Panc1 (cell line): ENCODE measurements at regions of chr6 and their contacts with region 1.

Region 1: DNA sequence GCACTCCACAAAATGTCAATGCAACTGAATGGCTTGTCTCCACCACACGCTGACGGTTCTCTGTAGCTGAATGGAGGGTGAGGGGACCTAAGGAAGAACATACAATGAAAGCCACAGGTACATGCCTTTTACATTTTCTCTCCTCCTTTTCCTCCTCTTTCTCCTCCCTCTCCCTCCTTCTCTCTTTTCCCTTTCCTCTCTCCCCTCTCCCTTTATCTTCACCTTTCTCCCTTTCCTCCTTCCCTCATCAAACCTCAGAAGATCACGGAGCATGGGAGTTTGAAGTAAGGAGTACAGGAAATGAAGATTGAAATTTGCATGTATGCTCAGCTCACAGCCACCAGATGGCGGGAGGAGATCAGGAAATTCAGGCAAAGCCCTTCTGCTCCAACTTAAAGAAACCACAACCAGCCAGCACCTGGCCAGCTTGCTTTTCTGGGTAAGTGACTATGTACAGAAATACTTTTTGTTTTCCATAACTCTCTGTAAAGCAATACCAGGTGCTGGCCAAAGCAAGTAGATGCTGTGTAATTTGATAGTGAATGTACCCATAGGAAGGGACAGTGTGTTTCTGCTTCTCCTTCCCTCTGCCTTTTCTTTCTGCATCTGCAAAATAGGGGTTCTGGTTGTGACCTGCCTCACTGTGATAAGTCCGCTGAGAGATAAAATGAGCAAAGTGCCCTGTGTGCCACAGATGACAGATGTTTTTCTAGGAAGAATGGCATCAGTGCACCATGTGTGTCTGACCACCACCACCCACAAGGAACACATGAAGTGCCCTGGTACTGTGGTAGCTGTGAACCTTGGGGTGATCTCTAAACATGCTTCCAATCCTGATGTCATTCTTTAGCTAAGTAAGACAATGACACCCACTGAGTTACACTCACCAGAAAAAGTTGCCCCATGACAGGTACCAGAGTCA is 18.6 kb upstream of the FOXO3 start:
- DNase-seq: no peak
- ATAC-seq: peak; percentile 93
- H3K4me3 ChIP-seq: peak overlapping the region; percentile 5 to 35
- H3K27ac ChIP-seq: no peak overlapping the region
- H3K4me1 ChIP-seq: no peaks in the 10 kb centered on the region
- H3K27me3 ChIP-seq: no peaks in the 10 kb centered on the region
- CTCF ChIP-seq: peak; percentile 95

Region 2: GRCh38 chr6:108592371-108593337 is 50.6 kb after region 1 on chr6:
- CTCF ChIA-PET with region 1: no interaction called
- POLR2A ChIA-PET with region 1: no interaction called
- in situ Hi-C with region 1: no loop called
- intact Hi-C with region 1: no loop called
- DNase-seq: no peak
- ATAC-seq: no peak
- H3K4me3 ChIP-seq: no peak overlapping the region
- H3K27ac ChIP-seq: no peak overlapping the region
- H3K4me1 ChIP-seq: peaks cover 40% of the 10 kb centered on the region
- H3K27me3 ChIP-seq: no peaks in the 10 kb centered on the region
- CTCF ChIP-seq: no peak

Region 3: GRCh38 chr6:108782179-108783041 is 240.3 kb after region 1 on chr6:
- CTCF ChIA-PET with region 1: no interaction called
- POLR2A ChIA-PET with region 1: no interaction called
- in situ Hi-C with region 1: no loop called
- intact Hi-C with region 1: loop called (anchors 5 kb)
- DNase-seq: peak; percentile 96
- ATAC-seq: peak; percentile 96
- H3K4me3 ChIP-seq: peak overlapping the region; percentile 49 to 68
- H3K27ac ChIP-seq: peak overlapping the region; percentile 49
- H3K4me1 ChIP-seq: peaks cover 11% of the 10 kb centered on the region
- H3K27me3 ChIP-seq: no peaks in the 10 kb centered on the region; the same call in 1 of the 2 replicates
- CTCF ChIP-seq: peak; percentile 97

Region 4: GRCh38 chr6:108896111-108896661 is 354.1 kb after region 1 on chr6:
- CTCF ChIA-PET with region 1: interaction called, 24 read pairs
- POLR2A ChIA-PET with region 1: no interaction called
- in situ Hi-C with region 1: no loop called
- intact Hi-C with region 1: loop called (anchors 1 kb)
- DNase-seq: no peak
- ATAC-seq: no peak
- H3K4me3 ChIP-seq: no peak overlapping the region
- H3K27ac ChIP-seq: no peak overlapping the region
- H3K4me1 ChIP-seq: no peaks in the 10 kb centered on the region
- H3K27me3 ChIP-seq: no peaks in the 10 kb centered on the region
- CTCF ChIP-seq: no peak

Region 5: DNA sequence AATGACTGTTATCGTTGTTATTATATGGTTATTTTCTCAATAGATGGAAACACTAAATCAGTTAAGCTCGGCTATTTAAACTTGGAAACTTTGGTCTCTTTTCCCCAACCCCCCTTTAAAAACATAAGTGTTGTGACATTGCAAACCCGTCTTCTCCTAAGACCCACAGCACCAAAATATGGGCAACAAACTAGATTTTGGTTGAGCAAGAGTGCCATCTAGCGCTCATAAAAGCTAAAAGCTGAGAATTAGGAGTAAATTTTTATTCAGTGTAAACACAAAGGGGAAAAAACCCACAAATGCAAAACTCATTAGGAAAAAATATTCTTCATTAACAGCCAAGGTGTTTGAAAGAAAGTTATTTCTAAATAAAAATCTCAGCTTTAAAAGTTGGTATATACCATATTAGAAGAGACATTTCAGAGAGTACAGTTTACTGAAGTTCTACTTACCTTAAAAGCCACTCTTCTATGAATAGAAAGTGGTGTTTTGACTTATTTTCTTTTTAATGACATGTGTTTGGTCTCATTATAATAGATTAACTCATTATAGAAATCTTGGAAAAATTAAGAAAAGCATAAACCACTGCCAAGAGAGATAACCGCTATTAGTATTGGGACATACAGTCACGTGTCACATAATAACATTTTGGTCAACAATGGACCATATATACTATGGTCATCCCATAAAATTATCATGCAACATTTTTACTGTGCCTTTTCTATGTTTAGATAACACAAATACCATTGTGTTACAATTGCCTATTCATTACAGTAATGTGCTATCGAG is 531.4 kb after region 1 on chr6:
- CTCF ChIA-PET with region 1: interaction called, 7 read pairs
- POLR2A ChIA-PET with region 1: no interaction called
- in situ Hi-C with region 1: no loop called
- intact Hi-C with region 1: loop called (anchors 2 kb)
- DNase-seq: peak; percentile 60
- ATAC-seq: peak; percentile 82
- H3K4me3 ChIP-seq: no peak overlapping the region
- H3K27ac ChIP-seq: no peak overlapping the region
- H3K4me1 ChIP-seq: peaks cover 3% of the 10 kb centered on the region; the same call in 1 of the 2 replicates
- H3K27me3 ChIP-seq: no peaks in the 10 kb centered on the region
- CTCF ChIP-seq: peak; percentile 81; the same call in 1 of the 2 replicates